Tibial artery (tissue), 4 donors: ENCODE measurements at regions of chr1 and their contacts with region 1.

Region 1: GRCh38 chr1:162997499-162998285 is 71.5 kb upstream of the RGS4 start:
- DNase-seq: no peak
- H3K4me3 ChIP-seq: no peak overlapping the region
- H3K27ac ChIP-seq: no peak overlapping the region
- H3K4me1 ChIP-seq: no peaks in the 10 kb centered on the region
- H3K27me3 ChIP-seq: no peaks in the 10 kb centered on the region
- CTCF ChIP-seq: no peak

Region 2: DNA sequence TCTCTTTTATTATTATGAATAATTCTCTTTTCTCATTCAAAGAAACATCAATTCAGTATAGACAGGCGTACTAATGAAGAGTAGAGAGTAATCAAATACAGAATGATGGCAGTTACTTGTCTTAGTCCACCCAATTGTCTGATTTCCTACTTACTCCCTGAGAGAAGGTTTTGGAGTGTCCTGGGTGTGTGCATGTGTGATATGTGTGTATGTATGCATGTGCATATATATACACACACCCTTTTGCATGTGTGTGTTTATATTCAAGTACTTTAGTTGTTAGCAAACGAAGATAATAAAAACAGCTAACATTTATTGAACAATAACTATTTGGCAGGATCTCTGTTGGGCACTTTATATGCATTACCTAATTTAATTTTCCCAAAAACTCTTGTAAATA is 73.5 kb before region 1 on chr1:
- intact Hi-C with region 1: loop called (anchors 2 kb)
- DNase-seq: no peak
- H3K4me3 ChIP-seq: no peak overlapping the region
- H3K27ac ChIP-seq: no peak overlapping the region
- H3K4me1 ChIP-seq: peaks cover 0 to 9% (median 4%) of the 10 kb centered on the region in 4 donors
- H3K27me3 ChIP-seq: no peaks in the 10 kb centered on the region
- CTCF ChIP-seq: no peak

Region 3: GRCh38 chr1:163471779-163472650 is 474.3 kb after region 1 on chr1:
- intact Hi-C with region 1: no loop called
- DNase-seq: no peak
- H3K4me3 ChIP-seq: no peak overlapping the region
- H3K27ac ChIP-seq: no peak overlapping the region
- H3K4me1 ChIP-seq: no peaks in the 10 kb centered on the region
- H3K27me3 ChIP-seq: no peaks in the 10 kb centered on the region
- CTCF ChIP-seq: no peak